ENCODE measurements at regions of chr1 and their contacts with region 1.

Region 1: GRCh38 chr1:50368179-50369012 is 54.8 kb downstream of the DMRTA2 start:
- DNase-seq: no peak
- ATAC-seq: peak; percentile 17

Region 2: DNA sequence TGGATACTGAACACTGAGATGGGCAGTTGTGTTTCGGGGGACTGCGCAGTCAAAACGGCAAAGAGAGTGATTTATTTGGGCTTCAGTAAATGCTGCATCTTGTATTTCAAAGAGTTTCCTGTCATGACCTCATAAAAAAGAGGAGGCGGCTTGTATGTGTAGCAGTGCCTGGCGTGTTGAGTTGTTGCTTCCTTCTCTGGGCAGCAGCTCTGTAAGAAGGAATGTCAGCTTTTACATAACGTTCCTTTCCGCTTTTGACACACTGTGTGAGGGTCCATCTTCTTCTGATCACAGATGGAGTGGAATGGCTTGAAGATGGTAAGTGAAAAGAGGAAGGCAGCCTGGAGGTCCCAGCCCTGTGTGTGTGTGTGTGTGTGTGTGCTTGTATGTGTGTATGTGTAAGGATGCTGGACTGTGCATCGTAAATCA is 258.7 kb before region 1 on chr1:
- intact Hi-C with region 1: no loop called
- DNase-seq: no peak
- ATAC-seq: peak; percentile 55

Region 3: GRCh38 chr1:50704126-50704525 is 335.7 kb after region 1 on chr1:
- intact Hi-C with region 1: loop called (anchors 10 kb)
- DNase-seq: no peak
- ATAC-seq: no peak

Region 4: GRCh38 chr1:52045236-52045635 is 1676.8 kb after region 1 on chr1:
- intact Hi-C with region 1: no loop called
- DNase-seq: no peak
- ATAC-seq: no peak